Head of caudate nucleus (tissue), 42 donors: ENCODE measurements at regions of chr5 and their contacts with region 1.

Region 1: DNA sequence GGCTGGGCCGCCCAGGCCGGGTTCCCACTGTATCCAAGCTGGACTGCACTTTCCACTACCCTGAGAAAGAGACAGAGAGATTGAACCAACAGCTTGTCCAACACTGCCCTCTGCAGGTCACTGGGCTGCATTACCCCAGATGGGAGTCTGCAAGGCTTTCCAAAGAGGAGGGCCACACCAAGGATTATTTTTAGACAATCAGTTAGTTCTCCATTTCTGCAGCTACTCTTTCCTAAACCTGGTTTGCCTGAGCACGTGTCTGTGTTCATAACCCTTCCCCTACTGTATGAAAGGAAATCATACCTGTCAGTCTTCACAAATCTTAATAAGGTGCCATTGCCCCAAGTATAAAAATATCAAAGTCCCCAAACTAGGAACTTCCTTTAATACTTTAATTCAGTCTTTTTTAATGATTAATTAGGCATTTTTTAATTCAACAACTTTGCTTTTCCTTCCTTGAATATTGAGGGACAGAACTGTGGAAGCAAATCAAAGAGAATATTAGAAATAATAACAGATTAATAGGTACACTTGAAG is 13.4 kb upstream of the FGF1 start:
- DNase-seq: peak; percentile 60 to 98 (median 92)

Region 2: GRCh38 chr5:142151436-142152383 is 547.5 kb before region 1 on chr5:
- intact Hi-C with region 1: loop called (anchors 10 kb)
- DNase-seq: peak in 24 of 42 donors; percentile 18 to 80 (median 51)

Region 3: DNA sequence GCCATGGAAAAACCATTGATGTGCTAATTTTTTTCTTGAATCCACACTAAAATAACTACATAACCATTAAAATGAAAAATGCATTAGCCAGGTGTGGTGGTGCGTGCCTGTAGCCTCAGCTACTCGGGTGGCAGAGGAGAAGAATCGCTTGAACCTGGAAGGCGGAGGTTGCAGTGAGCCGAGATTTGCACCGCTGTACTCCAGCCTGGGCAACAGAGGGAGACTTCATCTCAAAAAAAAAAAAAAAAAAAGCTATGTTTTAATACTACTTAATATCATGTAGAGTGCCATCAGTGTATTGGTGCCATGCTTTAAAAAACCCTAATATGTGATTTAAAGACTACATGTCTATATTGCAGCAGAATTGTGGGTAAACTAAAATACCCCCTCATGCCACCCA is 531.8 kb before region 1 on chr5:
- intact Hi-C with region 1: no loop called
- DNase-seq: no peak

Region 4: DNA sequence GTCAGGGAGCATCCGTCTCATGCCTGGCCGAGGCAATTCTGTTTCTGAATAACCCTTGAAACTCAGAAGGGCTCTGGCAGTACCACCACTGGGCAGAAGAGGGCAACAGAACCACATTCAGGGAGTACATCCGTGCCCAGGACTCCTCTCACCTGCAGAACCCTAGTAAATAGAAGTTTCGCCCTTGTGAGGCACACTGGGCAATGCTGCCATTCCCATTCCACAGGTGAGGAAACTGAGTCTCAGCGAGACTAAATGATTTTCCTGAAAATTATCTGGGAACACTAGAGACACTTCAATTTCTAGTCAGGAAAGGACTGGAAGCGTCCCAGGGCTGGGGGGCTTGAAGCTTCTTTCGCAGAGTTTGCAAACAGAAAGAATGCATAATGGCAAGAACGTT is 88.1 kb before region 1 on chr5:
- intact Hi-C with region 1: loop called (anchors 5 kb)
- DNase-seq: peak; percentile 57 to 92 (median 80)

Region 5: GRCh38 chr5:142627383-142628255 is 71.6 kb before region 1 on chr5:
- intact Hi-C with region 1: no loop called
- DNase-seq: peak in 18 of 42 donors; percentile 23 to 71 (median 43)

Region 6: DNA sequence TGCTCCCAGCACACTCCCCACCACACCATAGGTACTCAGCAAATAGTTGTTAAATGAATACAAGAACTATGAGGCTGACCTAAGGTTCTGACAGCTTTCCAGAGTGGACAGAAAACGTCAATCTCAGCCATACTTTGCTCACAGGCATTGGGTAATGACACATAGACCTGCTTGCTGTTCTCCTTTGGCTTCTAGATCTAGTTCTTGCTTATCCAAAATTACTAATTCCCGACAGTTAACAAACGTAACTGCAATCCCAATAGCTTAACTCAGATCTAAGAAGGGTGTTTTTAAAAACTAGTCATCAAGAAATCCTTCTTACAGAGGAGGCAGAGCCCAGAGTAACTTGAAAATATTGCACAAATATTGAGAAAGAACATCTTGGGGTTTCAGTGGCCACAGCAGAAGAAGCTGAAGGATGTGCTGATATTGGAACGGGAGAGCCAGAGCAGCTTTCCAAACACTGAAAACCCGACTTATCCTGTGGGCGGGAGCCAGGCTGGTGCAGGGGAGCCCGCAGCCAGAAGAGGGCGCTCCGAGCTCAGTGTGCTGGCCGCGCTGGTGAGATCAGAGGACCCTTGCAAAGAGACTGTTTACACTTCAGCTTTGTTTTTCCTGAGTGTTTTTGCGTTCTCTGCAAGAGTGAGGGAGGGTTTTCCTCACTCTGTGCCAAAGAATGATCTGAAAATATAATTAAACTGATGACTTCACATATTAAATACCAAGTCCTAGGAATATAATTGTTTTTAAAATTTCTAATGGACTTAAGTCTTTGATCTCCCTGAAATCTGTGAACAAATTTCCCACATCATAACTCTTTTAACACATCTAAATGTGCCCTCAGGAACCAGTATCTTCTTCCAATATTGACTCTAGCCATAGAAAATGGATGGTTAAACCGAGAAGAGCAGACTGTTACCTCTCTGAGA is 43.6 kb before region 1 on chr5:
- intact Hi-C with region 1: loop called (anchors 2 kb)
- DNase-seq: peak; percentile 76 to 97 (median 92)